ENCODE measurements at regions of chr16 and their contacts with region 1.

Region 1: GRCh38 chr16:84277237-84277823 is 17.3 kb upstream of the WFDC1 start:
- DNase-seq: peak; percentile 68 to 91
- ATAC-seq: peak; percentile 74
- H3K4me3 ChIP-seq: no peak overlapping the region
- H3K27ac ChIP-seq: no peak overlapping the region
- H3K4me1 ChIP-seq: no peaks in the 10 kb centered on the region
- H3K27me3 ChIP-seq: no peaks in the 10 kb centered on the region

Region 2: DNA sequence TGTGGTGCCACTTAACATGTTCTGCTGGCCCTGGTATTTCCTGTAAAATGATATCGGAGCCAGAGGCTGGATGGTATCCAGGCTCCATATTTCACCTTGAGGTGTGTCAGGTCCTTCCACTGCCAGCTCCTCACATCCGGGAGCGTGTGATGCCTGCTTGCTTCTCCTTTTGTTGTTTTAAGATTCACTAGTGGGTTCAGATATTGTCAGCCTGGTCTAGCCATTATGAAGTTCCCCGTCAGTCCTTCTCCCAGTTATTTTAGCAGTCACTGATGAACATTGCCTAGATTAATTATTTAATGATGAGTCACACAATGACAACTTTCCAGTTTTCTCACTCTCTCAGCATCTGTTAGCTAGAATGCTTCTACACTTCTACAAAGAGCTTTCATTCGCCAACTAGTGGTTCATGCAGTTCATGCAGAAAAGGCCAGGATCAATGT is 121.0 kb before region 1 on chr16:
- intact Hi-C with region 1: no loop called
- DNase-seq: no peak
- ATAC-seq: no peak
- H3K4me3 ChIP-seq: no peak overlapping the region
- H3K27ac ChIP-seq: no peak overlapping the region
- H3K4me1 ChIP-seq: no peaks in the 10 kb centered on the region
- H3K27me3 ChIP-seq: no peaks in the 10 kb centered on the region

Region 3: GRCh38 chr16:84308120-84308519 is 30.8 kb after region 1 on chr16:
- intact Hi-C with region 1: loop called (anchors 2 kb)
- DNase-seq: peak; percentile 58 to 88
- ATAC-seq: peak; percentile 28
- H3K4me3 ChIP-seq: no peak overlapping the region
- H3K27ac ChIP-seq: no peak overlapping the region
- H3K4me1 ChIP-seq: no peaks in the 10 kb centered on the region
- H3K27me3 ChIP-seq: no peaks in the 10 kb centered on the region

Region 4: GRCh38 chr16:84340325-84341040 is 63.2 kb after region 1 on chr16:
- intact Hi-C with region 1: no loop called
- DNase-seq: peak in 1 of 2 donors; percentile 66
- ATAC-seq: no peak
- H3K4me3 ChIP-seq: no peak overlapping the region
- H3K27ac ChIP-seq: no peak overlapping the region
- H3K4me1 ChIP-seq: no peaks in the 10 kb centered on the region
- H3K27me3 ChIP-seq: no peaks in the 10 kb centered on the region

Region 5: DNA sequence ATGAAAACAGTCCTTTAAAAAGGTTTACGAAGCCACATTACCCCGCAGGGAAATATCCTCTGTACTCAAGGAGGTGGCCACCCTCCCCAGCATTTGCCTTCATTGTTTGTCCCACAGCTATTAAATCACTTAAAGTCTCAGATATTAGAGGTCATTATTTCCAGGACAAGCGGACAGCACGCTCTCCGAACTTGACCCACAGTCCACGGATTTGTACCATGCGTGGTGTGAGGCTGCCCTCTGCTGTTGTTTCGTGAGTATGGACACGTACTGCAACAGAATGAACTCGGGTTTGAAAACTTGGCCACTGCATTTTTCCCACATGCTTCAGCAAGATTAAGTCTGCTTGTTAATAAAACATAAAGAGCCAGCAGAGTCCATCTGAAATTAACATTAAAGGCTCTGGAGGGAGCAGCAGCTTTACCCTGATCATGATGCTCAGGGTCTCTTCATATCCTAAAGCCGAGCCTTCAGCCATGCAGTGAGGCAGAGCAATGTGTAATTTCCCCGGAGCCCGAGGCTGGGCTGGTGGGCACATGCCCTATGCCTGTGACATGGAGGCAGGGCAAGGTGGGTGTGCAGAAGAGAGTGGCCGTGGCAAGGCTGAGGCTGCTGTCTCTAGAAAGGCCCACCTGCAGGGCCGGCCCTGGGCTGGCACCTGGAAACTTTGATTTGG is 207.4 kb after region 1 on chr16:
- intact Hi-C with region 1: loop called (anchors 2 to 5 kb)
- DNase-seq: peak in 1 of 2 donors; percentile 79
- ATAC-seq: peak; percentile 64
- H3K4me3 ChIP-seq: no peak overlapping the region
- H3K27ac ChIP-seq: no peak overlapping the region
- H3K4me1 ChIP-seq: no peaks in the 10 kb centered on the region
- H3K27me3 ChIP-seq: no peaks in the 10 kb centered on the region